H1 (cell line): ENCODE measurements at regions of chr11 and their contacts with region 1.

Region 1: GRCh38 chr11:70410276-70411205 is 12.2 kb downstream of the CTTN start:
- DNase-seq: no peak
- H3K4me3 ChIP-seq: no peak overlapping the region
- H3K27ac ChIP-seq: no peak overlapping the region
- H3K4me1 ChIP-seq: no peaks in the 10 kb centered on the region
- H3K27me3 ChIP-seq: no peaks in the 10 kb centered on the region
- CTCF ChIP-seq: no peak
- EP300 ChIP-seq: no peak
- POLR2A ChIP-seq: no peak
- RAD21 ChIP-seq: no peak

Region 2: DNA sequence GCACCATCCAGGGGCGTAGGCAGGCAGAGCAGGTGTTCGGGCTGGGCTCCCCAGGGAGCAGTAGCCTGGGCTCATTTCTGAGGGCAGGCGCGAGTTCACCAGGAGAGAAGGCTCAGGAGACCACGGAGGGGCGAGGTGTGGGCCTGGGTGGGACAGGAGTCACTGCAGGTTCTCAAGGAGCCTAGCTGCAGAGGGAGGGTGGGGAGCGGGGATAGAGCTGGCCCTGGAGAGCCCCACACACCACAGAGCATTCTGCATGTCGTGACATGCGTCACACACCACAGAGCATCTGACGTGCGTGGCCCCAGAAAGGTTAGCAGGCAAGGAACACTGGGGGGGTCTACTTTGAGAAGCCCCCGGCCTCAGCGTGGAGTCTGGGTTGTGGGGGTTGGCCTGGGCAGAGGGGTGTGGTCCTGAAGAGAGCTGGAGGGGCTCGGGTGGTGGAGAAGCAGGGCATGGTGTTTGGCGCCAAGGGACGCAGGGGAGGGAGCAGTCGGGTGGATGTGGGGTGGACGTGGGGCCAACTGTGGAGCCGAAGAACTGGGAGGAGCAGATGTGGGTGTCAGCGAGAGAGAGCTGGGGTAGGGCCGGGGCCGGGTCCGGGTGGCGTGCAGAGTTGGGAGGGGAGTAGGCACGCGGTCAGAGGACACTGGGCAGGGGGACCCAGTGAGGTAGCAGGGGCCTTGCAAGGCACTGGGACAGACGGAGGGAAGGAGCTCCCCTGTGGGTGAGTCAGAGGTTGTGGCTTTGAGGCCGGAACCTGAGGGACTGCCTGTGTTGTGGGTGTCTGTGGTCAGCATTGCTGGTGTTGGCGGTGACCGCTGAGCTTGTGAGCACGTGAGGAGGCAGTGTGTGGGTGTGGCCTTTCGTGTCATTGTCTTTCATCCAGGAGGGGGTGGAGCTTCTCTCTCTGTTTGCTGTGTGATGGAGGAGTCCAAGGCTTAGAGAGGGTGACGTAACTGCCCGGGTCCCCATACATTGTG is 13.3 kb after region 1 on chr11:
- CTCF ChIA-PET with region 1: interaction called, 6 read pairs
- POLR2A ChIA-PET with region 1: interaction called, 12 read pairs
- DNase-seq: no peak
- H3K4me3 ChIP-seq: no peak overlapping the region
- H3K27ac ChIP-seq: 0 out of 2 replicates have a peak overlapping the region, but pooled peaks have one; percentile 15
- H3K4me1 ChIP-seq: peaks cover 0 to 10% (median 3%) of the 10 kb centered on the region in 4 experiments; a peak in 3 of 7 replicates
- H3K27me3 ChIP-seq: no peaks in the 10 kb centered on the region
- CTCF ChIP-seq: peak in 1 of 3 experiments; percentile 17; a peak in 1 of 4 replicates
- EP300 ChIP-seq: no peak
- POLR2A ChIP-seq: no peak
- RAD21 ChIP-seq: no peak

Region 3: GRCh38 chr11:70466154-70466553 is 55.6 kb after region 1 on chr11:
- CTCF ChIA-PET with region 1: no interaction called
- POLR2A ChIA-PET with region 1: no interaction called
- DNase-seq: no peak
- H3K4me3 ChIP-seq: no peak overlapping the region
- H3K27ac ChIP-seq: no peak overlapping the region
- H3K4me1 ChIP-seq: peaks cover 0 to 4% (median under 1%) of the 10 kb centered on the region in 4 experiments; a peak in 3 of 7 replicates
- H3K27me3 ChIP-seq: no peaks in the 10 kb centered on the region; a peak in 1 of 7 replicates
- CTCF ChIP-seq: no peak
- EP300 ChIP-seq: no peak
- POLR2A ChIP-seq: no peak
- RAD21 ChIP-seq: no peak